ENCODE measurements at regions of chr2 and their contacts with region 1.

Region 1: GRCh38 chr2:158745044-158745865 is 49.9 kb upstream of the DAPL1 start:
- DNase-seq: peak; percentile 32 to 84 (median 57)
- H3K4me3 ChIP-seq: no peak overlapping the region
- H3K27ac ChIP-seq: no peak overlapping the region
- H3K4me1 ChIP-seq: peaks cover 10 to 14% of the 10 kb centered on the region in 2 donors
- H3K27me3 ChIP-seq: no peaks in the 10 kb centered on the region
- CTCF ChIP-seq: peak; percentile 37 to 67 (median 54)
- POLR2A ChIP-seq: no peak

Region 2: DNA sequence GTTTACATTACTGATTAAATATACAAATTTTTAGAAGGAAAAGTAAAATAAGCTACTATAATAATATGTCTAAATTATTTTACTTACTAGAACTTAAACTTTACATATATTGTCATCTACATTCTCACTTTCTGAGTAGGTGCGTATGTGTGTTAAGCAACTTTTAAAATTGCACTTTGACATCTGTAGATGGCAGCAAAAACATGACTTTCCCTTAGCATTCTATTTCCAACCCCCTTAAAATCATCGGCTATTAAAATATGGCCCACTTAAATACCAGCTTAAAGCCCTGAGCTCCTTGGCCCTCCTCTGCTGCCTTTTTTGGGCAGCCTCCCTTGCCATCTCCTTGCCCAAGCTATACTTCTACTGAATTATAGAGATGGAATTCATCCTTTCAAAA is 565.6 kb before region 1 on chr2:
- intact Hi-C with region 1: loop called (anchors 10 kb)
- DNase-seq: no peak
- H3K4me3 ChIP-seq: no peak overlapping the region
- H3K27ac ChIP-seq: no peak overlapping the region
- H3K4me1 ChIP-seq: no peaks in the 10 kb centered on the region
- H3K27me3 ChIP-seq: no peaks in the 10 kb centered on the region
- CTCF ChIP-seq: peak in 4 of 6 experiments; percentile 20 to 42 (median 34)
- POLR2A ChIP-seq: no peak

Region 3: DNA sequence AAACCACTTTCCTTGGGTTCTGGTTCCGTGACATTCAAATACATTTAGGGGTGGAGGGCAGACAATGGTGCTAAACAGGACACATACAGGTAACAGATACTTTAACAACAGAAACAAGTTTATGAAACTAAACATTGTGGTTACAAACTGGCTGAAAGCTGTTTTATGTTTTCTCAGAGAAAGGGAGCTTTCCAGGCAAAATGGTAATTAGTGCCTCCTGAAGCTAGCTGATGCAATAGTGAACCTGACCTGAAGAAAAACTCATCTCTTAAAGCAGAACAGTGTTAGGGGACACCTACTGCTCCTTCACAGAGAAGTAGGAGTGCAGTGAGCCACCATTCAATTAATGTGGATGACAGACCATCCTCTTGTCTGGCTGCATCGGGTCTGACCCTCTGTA is 427.6 kb before region 1 on chr2:
- intact Hi-C with region 1: no loop called
- DNase-seq: no peak
- H3K4me3 ChIP-seq: no peak overlapping the region
- H3K27ac ChIP-seq: no peak overlapping the region
- H3K4me1 ChIP-seq: no peaks in the 10 kb centered on the region
- H3K27me3 ChIP-seq: no peaks in the 10 kb centered on the region
- CTCF ChIP-seq: no peak
- POLR2A ChIP-seq: no peak

Measured in adrenal gland (tissue), 19 donors.